ENCODE measurements at regions of chr17 and their contacts with region 1.

Region 1: GRCh38 chr17:72539981-72540897 is 419.4 kb downstream of the SOX9 start:
- DNase-seq: peak; percentile 66
- ATAC-seq: peak; percentile 99
- H3K4me3 ChIP-seq: peak overlapping the region in 1 of 3 experiments; percentile 45; a peak in 3 of 6 replicates
- H3K27ac ChIP-seq: peak overlapping the region; percentile 30
- H3K4me1 ChIP-seq: peaks cover 80% of the 10 kb centered on the region
- H3K27me3 ChIP-seq: no peaks in the 10 kb centered on the region
- CTCF ChIP-seq: peak; percentile 93
- EP300 ChIP-seq: peak in 1 of 2 experiments; percentile 58; a peak in 2 of 4 replicates
- POLR2A ChIP-seq: no peak
- RAD21 ChIP-seq: peak; percentile 100

Region 2: GRCh38 chr17:70636517-70637133 is 1903.6 kb before region 1 on chr17:
- CTCF ChIA-PET with region 1: interaction called, 6 read pairs
- POLR2A ChIA-PET with region 1: no interaction called
- in situ Hi-C with region 1: loop called (anchors 10 kb)
- intact Hi-C with region 1: loop called (anchors 5 kb)
- DNase-seq: peak; percentile 29
- ATAC-seq: no peak
- H3K4me3 ChIP-seq: no peak overlapping the region
- H3K27ac ChIP-seq: no peak overlapping the region
- H3K4me1 ChIP-seq: peaks cover 8% of the 10 kb centered on the region; the same call in 1 of the 2 replicates
- H3K27me3 ChIP-seq: no peaks in the 10 kb centered on the region
- CTCF ChIP-seq: peak; percentile 70
- EP300 ChIP-seq: no peak
- POLR2A ChIP-seq: no peak
- RAD21 ChIP-seq: peak; percentile 45; the same call in 1 of the 2 replicates

Region 3: DNA sequence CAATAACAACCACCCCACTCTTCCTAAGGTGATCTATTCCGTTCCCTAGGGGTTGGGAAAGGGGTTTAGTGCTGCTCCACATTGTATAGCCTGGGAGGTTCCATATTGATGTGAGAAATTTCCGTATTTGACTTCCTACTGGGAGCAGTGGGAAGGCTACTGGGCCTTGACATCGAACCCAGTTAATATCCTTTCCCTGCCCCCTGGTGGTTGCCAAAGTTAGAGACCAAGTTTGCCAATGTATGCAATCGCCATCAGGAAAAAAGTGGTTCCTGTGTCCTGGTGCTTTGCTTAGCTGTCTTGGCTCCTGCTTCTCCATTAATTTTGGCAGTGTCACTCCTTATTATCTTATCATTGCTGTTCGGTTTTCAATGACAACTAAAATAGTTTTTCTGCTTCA is 1456.0 kb before region 1 on chr17:
- CTCF ChIA-PET with region 1: no interaction called
- POLR2A ChIA-PET with region 1: no interaction called
- in situ Hi-C with region 1: no loop called
- intact Hi-C with region 1: loop called (anchors 5 kb)
- DNase-seq: peak; percentile 26
- ATAC-seq: peak; percentile 78
- H3K4me3 ChIP-seq: no peak overlapping the region
- H3K27ac ChIP-seq: no peak overlapping the region
- H3K4me1 ChIP-seq: no peaks in the 10 kb centered on the region
- H3K27me3 ChIP-seq: no peaks in the 10 kb centered on the region
- CTCF ChIP-seq: peak; percentile 66
- EP300 ChIP-seq: no peak
- POLR2A ChIP-seq: no peak
- RAD21 ChIP-seq: peak; percentile 35; the same call in 1 of the 2 replicates

Region 4: GRCh38 chr17:71677439-71677838 is 862.8 kb before region 1 on chr17:
- CTCF ChIA-PET with region 1: no interaction called
- POLR2A ChIA-PET with region 1: interaction called, 4 read pairs
- in situ Hi-C with region 1: no loop called
- intact Hi-C with region 1: loop called (anchors 10 kb)
- DNase-seq: no peak
- ATAC-seq: no peak
- H3K4me3 ChIP-seq: no peak overlapping the region
- H3K27ac ChIP-seq: no peak overlapping the region
- H3K4me1 ChIP-seq: peaks cover 29% of the 10 kb centered on the region
- H3K27me3 ChIP-seq: no peaks in the 10 kb centered on the region
- CTCF ChIP-seq: no peak
- EP300 ChIP-seq: no peak
- POLR2A ChIP-seq: no peak
- RAD21 ChIP-seq: no peak

Region 5: GRCh38 chr17:72126563-72127486 is 413.4 kb before region 1 on chr17:
- CTCF ChIA-PET with region 1: no interaction called
- POLR2A ChIA-PET with region 1: interaction called, 72 read pairs
- in situ Hi-C with region 1: no loop called
- intact Hi-C with region 1: loop called (anchors 1 kb)
- DNase-seq: peak; percentile 95
- ATAC-seq: peak; percentile 64
- H3K4me3 ChIP-seq: no peak overlapping the region
- H3K27ac ChIP-seq: peak overlapping the region; percentile 36
- H3K4me1 ChIP-seq: peaks cover 46% of the 10 kb centered on the region
- H3K27me3 ChIP-seq: no peaks in the 10 kb centered on the region; a peak in 1 of 5 replicates
- CTCF ChIP-seq: 0 out of 2 replicates have a peak, but pooled peaks have one; percentile 12
- EP300 ChIP-seq: peak in 1 of 2 experiments; percentile 71; a peak in 1 of 4 replicates
- POLR2A ChIP-seq: peak; percentile 13 to 50; a peak in 2 of 4 replicates
- RAD21 ChIP-seq: no peak

Region 6: DNA sequence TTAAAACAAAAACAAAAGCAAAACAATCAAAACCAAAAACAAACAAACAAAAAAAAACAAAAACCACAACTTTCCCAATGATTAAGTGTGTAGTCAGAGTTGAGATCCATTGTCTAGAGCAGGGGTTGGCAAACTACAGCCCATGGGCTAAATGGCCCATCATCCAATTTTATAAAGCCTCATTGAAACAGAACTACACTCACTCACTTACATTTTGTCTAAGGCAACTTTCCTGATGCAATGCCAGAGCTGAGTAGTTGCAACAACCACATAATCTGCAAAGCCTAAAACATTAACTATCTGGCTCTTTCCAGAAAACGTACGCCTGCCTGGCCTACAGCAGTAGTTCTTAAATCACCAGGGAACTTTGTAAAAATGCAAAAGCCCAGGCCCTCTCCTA is 295.3 kb before region 1 on chr17:
- CTCF ChIA-PET with region 1: no interaction called
- POLR2A ChIA-PET with region 1: no interaction called
- in situ Hi-C with region 1: no loop called
- intact Hi-C with region 1: no loop called
- DNase-seq: no peak
- ATAC-seq: no peak
- H3K4me3 ChIP-seq: no peak overlapping the region
- H3K27ac ChIP-seq: no peak overlapping the region
- H3K4me1 ChIP-seq: no peaks in the 10 kb centered on the region
- H3K27me3 ChIP-seq: peaks cover 2 to 24% of the 10 kb centered on the region in 2 experiments; a peak in 2 of 5 replicates
- CTCF ChIP-seq: no peak
- EP300 ChIP-seq: no peak
- POLR2A ChIP-seq: no peak
- RAD21 ChIP-seq: no peak

Region 7: GRCh38 chr17:72515291-72516065 is 24.8 kb before region 1 on chr17:
- CTCF ChIA-PET with region 1: no interaction called
- POLR2A ChIA-PET with region 1: interaction called, 10 read pairs
- in situ Hi-C with region 1: no loop called
- intact Hi-C with region 1: no loop called
- DNase-seq: no peak
- ATAC-seq: no peak
- H3K4me3 ChIP-seq: no peak overlapping the region
- H3K27ac ChIP-seq: no peak overlapping the region
- H3K4me1 ChIP-seq: peaks cover 87% of the 10 kb centered on the region
- H3K27me3 ChIP-seq: no peaks in the 10 kb centered on the region
- CTCF ChIP-seq: no peak
- EP300 ChIP-seq: no peak
- POLR2A ChIP-seq: no peak
- RAD21 ChIP-seq: no peak

Measured in HepG2 (cell line).